GM10248 (cell line): ENCODE measurements at regions of chr19 and their contacts with region 1.

Region 1: GRCh38 chr19:40640744-40641143 is 39.6 kb downstream of the LTBP4 start:
- DNase-seq: no peak
- CTCF ChIP-seq: no peak

Region 2: DNA sequence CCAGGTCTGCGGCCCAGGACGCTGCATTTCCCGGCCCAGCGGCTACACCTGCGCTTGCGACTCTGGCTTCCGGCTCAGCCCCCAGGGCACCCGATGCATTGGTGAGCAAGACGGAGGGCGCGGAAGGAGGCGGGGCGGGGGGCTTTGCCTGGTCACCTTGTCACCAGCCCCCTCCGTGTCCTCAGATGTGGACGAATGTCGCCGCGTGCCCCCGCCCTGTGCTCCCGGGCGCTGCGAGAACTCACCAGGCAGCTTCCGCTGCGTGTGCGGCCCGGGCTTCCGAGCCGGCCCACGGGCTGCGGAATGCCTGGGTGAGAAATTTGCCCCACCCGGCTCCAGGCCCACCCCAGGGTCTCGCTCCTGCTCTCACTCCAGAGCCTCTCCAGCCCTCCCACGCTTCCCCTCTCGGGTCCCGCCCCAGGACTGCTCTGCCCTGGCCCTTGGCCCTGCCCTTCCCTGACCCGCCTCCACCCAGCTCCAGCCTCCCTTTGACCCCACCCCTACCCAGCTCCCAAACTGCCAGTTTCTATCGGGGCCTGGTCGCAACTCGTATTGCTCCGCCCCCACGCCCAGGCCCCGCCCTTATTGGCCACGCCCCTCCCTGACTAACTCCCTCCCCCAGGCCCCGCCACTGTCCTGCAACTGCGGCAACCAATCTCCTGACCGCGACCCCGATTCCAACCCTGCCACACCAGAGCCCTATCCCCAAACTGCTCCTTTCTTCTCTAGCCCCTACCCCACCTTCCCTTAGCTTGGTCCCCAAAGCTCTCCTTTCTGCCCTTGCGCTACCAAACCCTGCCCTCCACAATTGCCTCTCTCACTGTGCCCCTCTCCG is 31.0 kb before region 1 on chr19:
- CTCF ChIA-PET with region 1: interaction called, 47 read pairs
- POLR2A ChIA-PET with region 1: no interaction called
- DNase-seq: peak; percentile 91
- CTCF ChIP-seq: no peak

Region 3: GRCh38 chr19:40650749-40651305 is 10.1 kb after region 1 on chr19:
- CTCF ChIA-PET with region 1: interaction called, 74 read pairs
- POLR2A ChIA-PET with region 1: no interaction called
- DNase-seq: no peak
- CTCF ChIP-seq: no peak

Region 4: GRCh38 chr19:40658031-40658430 is 17.3 kb after region 1 on chr19:
- CTCF ChIA-PET with region 1: interaction called, 24 read pairs
- POLR2A ChIA-PET with region 1: no interaction called
- DNase-seq: no peak
- CTCF ChIP-seq: no peak

Region 5: DNA sequence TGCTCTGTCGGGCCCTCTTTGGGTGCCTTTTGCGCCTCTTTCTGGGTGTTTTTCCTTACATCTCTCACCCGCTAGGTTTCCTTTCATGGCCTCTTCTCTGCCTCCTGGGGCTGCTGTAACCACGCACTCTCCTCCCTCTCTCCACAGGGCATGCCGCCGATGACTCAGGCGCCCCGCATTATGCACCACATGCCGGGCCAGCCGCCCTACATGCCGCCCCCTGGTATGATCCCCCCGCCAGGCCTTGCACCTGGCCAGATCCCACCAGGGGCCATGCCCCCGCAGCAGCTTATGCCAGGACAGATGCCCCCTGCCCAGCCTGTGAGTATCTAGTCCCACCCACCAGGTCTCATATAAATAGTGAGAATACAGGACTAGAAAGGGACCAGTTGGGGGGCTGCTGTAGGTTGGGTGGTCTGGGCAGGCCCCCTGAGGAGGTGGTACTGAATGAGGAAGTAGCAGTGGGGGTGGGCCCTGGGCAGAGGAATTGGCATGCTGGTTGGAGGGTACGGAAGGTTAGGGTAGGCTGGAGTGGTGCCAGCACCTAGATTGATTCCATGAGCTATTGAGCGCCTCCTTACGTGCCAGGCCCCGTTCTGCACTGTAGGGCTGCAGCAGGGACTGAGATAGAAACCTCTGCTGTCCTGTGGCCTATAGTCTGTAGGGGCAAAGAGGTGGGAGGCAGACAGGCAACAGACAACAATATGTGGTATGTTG is 122.2 kb after region 1 on chr19:
- CTCF ChIA-PET with region 1: no interaction called
- POLR2A ChIA-PET with region 1: no interaction called
- DNase-seq: no peak
- CTCF ChIP-seq: no peak